ENCODE measurements at regions of chr7 and their contacts with region 1.

Region 1: DNA sequence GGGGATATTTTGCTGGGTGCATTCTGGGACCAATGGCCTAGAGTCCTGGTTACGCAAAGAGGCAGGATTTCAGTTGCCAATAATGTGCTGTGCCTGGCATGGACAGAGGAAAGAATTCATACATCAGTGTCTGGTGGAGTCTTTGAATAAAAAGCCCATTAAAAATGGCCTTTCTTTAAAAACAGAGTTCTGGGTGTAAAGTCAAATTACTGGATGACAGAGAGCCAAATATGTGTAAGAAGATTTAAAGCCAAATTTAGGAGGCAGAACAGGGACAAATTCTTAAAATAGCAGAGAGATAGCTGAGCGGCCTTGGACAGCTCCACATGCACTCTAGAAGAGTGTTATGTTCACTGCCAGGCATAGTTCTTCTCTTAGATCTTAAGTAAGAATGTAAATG is 60.8 kb upstream of the MEOX2 start:
- DNase-seq: no peak
- H3K4me3 ChIP-seq: no peak overlapping the region
- H3K27ac ChIP-seq: peak overlapping the region in 1 of 4 donors; percentile 42
- H3K4me1 ChIP-seq: no peaks in the 10 kb centered on the region
- H3K27me3 ChIP-seq: no peaks in the 10 kb centered on the region
- CTCF ChIP-seq: no peak
- EP300 ChIP-seq: no peak
- POLR2A ChIP-seq: no peak

Region 2: DNA sequence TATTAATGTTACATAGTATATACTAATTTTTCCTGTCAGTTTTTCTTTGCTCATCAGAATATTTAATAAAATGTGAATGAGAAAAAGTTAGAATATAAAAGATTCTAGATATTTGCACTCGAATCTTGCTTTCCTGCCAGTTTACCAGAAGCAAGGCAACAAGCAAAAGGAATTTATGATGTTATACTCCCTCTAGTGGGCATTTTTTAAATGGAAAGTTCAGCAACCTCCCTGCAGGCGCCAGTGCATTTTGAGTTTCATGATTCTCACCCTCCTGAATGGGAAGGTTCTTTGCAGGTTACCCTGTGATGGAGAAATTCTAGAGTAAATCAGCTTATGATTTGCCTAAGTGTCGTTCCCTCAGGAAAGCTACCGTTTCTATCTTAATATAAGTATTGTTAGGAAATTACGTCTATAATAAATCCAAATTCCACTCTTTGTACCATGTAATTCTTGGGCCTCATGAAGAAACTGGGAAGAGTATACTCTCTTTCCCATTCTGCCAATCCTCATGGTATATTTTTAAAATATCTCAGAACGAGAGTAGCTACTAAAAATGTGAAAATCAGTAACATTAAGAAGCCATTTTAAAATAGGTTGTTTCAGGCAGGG is 324.1 kb after region 1 on chr7:
- in situ Hi-C with region 1: loop called in 1 of 4 experiments (anchors 25 kb)
- intact Hi-C with region 1: no loop called
- DNase-seq: peak; percentile 10
- H3K4me3 ChIP-seq: no peak overlapping the region
- H3K27ac ChIP-seq: no peak overlapping the region
- H3K4me1 ChIP-seq: peaks cover 0 to 4% (median 0%) of the 10 kb centered on the region in 4 donors
- H3K27me3 ChIP-seq: no peaks in the 10 kb centered on the region
- CTCF ChIP-seq: peak; percentile 79 to 90 (median 84)
- EP300 ChIP-seq: no peak
- POLR2A ChIP-seq: no peak

Measured in transverse colon (tissue), 4 donors.